Activated CD8-positive, alpha-beta T cell treated with anti-CD3 and anti-CD28 coated beads, Interleukin-2, amount 10 ng/mL, durations not matched to agents 7 days and 5 days (primary cell): ENCODE measurements at regions of chr12 and their contacts with region 1.

Region 1: DNA sequence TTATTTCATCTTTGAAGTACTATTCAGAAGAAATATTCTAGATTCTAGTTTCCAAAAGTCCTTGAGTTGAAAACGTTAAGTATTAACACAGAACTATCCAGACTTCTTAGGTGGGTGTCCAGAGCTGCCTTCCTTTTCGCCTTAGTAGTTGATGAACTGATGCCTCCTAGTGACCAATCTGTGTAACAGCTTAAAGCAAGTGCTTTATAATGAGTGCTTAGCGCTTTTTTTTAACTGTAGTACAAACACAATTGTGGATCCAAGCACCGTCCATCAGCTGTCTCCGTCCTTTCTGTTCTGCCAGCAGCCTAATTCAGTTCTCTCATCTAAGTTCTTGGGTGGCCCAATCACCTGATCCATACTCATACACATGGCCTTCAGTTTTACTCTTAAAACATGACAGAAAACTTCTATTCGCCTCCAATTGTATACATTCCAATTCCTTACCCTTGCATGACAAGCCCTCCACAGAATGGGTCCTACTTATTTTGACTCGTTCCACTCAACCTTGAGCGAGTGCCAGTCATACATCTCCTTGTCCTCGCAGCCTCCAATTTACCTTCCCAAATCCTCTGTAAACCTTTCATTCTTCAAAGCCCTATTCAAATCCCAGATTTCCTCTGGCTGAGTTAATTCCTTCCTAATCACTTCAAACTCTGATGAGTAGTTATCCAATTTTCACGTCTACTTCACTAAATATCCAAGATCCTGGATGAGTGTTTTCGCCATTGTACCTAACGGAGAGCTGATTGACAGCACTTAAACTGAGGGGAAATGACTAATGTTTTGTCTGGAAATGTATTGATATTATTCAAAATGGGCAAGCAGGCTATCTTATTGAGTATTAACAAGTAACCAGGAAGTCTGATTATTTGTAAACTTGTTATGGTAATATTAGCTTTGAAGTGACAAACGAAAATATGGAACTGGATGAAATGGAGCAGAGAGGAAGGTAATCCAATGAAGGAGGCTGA is 5.8 kb upstream of the PHLDA1 start:
- DNase-seq: peak; percentile 58
- ATAC-seq: peak; percentile 63
- H3K4me3 Mint-ChIP-seq: no peak overlapping the region
- H3K27ac Mint-ChIP-seq: no peak overlapping the region
- H3K4me1 Mint-ChIP-seq: peaks cover 26% of the 10 kb centered on the region
- H3K27me3 Mint-ChIP-seq: peaks cover 4% of the 10 kb centered on the region

Region 2: GRCh38 chr12:75526655-75527511 is 510.5 kb before region 1 on chr12:
- CTCF ChIA-PET with region 1: interaction called, 38 read pairs
- POLR2A ChIA-PET with region 1: interaction called, 4 read pairs
- DNase-seq: peak; percentile 30
- ATAC-seq: peak; percentile 87
- H3K4me3 Mint-ChIP-seq: no peak overlapping the region
- H3K27ac Mint-ChIP-seq: no peak overlapping the region
- H3K4me1 Mint-ChIP-seq: peaks cover 7% of the 10 kb centered on the region
- H3K27me3 Mint-ChIP-seq: peaks cover 22% of the 10 kb centered on the region

Region 3: DNA sequence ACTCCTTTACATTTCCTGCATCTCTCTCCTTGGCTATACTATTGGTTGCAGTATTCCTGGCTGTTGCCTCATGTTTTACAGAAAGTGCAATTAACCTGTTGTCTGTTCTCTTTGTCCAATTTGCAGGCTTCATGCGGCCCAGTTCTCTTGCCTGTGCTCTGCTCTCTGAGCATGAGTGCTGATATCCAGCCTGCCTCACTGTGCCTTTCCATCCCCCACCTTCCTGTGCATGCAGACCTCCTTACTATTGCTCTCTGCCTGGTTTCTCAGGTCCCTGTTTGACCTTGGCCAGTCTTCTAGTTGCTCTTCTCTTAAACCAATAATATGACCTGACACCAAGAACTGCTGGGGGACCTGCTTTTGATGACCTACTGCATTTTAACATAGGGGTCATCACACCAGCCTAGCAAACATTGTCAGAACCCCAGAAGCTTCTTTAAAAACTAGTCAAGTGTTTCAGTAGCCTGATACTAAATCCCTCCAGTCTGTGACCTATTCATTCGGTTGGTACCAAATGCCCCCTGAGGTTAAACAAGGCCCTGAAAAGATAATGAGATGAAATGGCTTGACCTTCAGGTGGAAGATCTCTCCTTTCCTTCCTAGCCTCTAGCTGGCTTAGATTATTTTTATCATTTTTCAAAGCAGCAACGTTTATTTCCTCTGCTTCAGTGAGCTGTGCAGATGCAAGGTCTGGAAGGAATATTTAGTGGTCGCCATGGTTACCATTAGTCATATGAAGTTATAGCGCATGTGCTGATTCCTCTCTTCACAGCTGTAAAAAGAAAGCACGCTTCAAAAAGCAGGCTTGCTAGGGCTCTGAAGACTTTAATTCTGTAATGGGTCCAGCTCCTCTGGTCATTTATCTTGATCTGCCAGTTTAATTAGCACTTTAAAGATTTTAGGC is 222.3 kb before region 1 on chr12:
- CTCF ChIA-PET with region 1: interaction called, 22 read pairs
- POLR2A ChIA-PET with region 1: interaction called, 12 read pairs
- DNase-seq: no peak
- ATAC-seq: peak; percentile 50
- H3K4me3 Mint-ChIP-seq: no peak overlapping the region
- H3K27ac Mint-ChIP-seq: no peak overlapping the region
- H3K4me1 Mint-ChIP-seq: peaks cover 10% of the 10 kb centered on the region
- H3K27me3 Mint-ChIP-seq: peaks cover 3% of the 10 kb centered on the region

Region 4: GRCh38 chr12:76049575-76050251 is 12.3 kb after region 1 on chr12:
- CTCF ChIA-PET with region 1: interaction called, 15 read pairs
- POLR2A ChIA-PET with region 1: interaction called, 3 read pairs
- DNase-seq: no peak
- ATAC-seq: no peak
- H3K4me3 Mint-ChIP-seq: no peak overlapping the region
- H3K27ac Mint-ChIP-seq: no peak overlapping the region
- H3K4me1 Mint-ChIP-seq: peaks cover 3% of the 10 kb centered on the region
- H3K27me3 Mint-ChIP-seq: no peaks in the 10 kb centered on the region